ENCODE measurements at regions of chr20 and their contacts with region 1.

Region 1: DNA sequence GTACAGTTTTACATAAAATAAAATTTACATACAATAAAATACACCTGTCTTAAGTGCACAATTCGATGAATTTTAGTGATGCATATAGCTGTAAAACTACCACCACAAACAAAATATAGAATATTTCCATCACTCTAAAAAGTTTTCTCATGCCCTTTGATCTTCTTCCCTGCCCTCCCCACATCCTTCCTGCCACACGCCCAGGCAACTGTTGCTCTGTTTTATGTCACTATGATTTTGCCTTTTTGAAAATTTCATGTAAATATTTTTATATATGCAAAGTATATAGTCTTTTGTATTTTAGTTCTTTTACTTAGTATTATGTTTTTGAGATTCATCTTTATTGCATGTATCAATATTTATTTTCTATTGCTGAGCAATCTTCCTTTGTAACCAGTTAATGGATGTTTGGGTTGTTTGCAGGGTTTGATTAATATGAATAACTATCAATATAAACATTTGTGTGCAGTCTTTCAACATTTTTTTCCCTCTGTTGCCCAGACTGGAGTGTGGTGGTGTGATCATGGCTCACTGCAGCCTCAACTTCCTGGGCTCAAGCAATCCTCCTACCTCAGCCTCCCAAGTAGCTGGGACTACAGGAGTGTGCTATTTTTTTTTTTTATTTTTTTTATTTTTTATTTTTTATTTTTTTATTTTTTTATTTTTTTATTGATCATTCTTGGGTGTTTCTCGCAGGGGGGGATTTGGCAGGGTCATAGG is 23.8 kb upstream of the SAMHD1 start:
- DNase-seq: peak in 8 of 9 donors; percentile 49 to 92 (median 88)
- ATAC-seq: peak; percentile 96
- H3K4me3 ChIP-seq: peak overlapping the region; percentile 8
- H3K4me3 Mint-ChIP-seq: peak overlapping the region; percentile 35 to 87 (median 70)
- H3K27ac ChIP-seq: peak overlapping the region; percentile 69
- H3K27ac Mint-ChIP-seq: peak overlapping the region; percentile 72 to 99 (median 91)
- H3K4me1 ChIP-seq: peaks cover 29 to 40% of the 10 kb centered on the region in 2 donors
- H3K4me1 Mint-ChIP-seq: peaks cover 16 to 53% (median 41%) of the 10 kb centered on the region in 7 donors
- H3K27me3 ChIP-seq: no peaks in the 10 kb centered on the region
- H3K27me3 Mint-ChIP-seq: no peaks in the 10 kb centered on the region

Region 2: GRCh38 chr20:36919715-36920333 is 55.4 kb before region 1 on chr20:
- CTCF ChIA-PET with region 1: no interaction called
- POLR2A ChIA-PET with region 1: interaction called, 8 read pairs
- intact Hi-C with region 1: loop called in 1 of 2 experiments (anchors 1 kb)
- DNase-seq: peak in 7 of 9 donors; percentile 43 to 73 (median 67)
- ATAC-seq: peak; percentile 90
- H3K4me3 ChIP-seq: no peak overlapping the region
- H3K4me3 Mint-ChIP-seq: peak overlapping the region in 5 of 10 donors; percentile 2 to 34 (median 26)
- H3K27ac ChIP-seq: peak overlapping the region; percentile 47
- H3K27ac Mint-ChIP-seq: peak overlapping the region; percentile 56 to 98 (median 75)
- H3K4me1 ChIP-seq: peaks cover 0 to 30% of the 10 kb centered on the region in 2 donors
- H3K4me1 Mint-ChIP-seq: peaks cover 15 to 44% (median 24%) of the 10 kb centered on the region in 7 donors
- H3K27me3 ChIP-seq: no peaks in the 10 kb centered on the region
- H3K27me3 Mint-ChIP-seq: no peaks in the 10 kb centered on the region

Region 3: GRCh38 chr20:36941401-36941835 is 33.8 kb before region 1 on chr20:
- CTCF ChIA-PET with region 1: interaction called, 3 read pairs
- POLR2A ChIA-PET with region 1: interaction called, 19 read pairs
- intact Hi-C with region 1: loop called (anchors 1 kb)
- DNase-seq: no peak
- ATAC-seq: peak; percentile 31
- H3K4me3 ChIP-seq: peak overlapping the region; percentile 22
- H3K4me3 Mint-ChIP-seq: peak overlapping the region; percentile 46 to 99 (median 70)
- H3K27ac ChIP-seq: peak overlapping the region; percentile 91
- H3K27ac Mint-ChIP-seq: peak overlapping the region; percentile 29 to 99 (median 91)
- H3K4me1 ChIP-seq: peaks cover 72 to 83% of the 10 kb centered on the region in 2 donors
- H3K4me1 Mint-ChIP-seq: peaks cover 38 to 85% (median 77%) of the 10 kb centered on the region in 7 donors
- H3K27me3 ChIP-seq: no peaks in the 10 kb centered on the region
- H3K27me3 Mint-ChIP-seq: no peaks in the 10 kb centered on the region

Region 4: GRCh38 chr20:36957875-36958667 is 17.2 kb before region 1 on chr20:
- CTCF ChIA-PET with region 1: interaction called, 11 read pairs
- POLR2A ChIA-PET with region 1: interaction called, 57 read pairs
- intact Hi-C with region 1: no loop called
- DNase-seq: no peak
- ATAC-seq: peak; percentile 86
- H3K4me3 ChIP-seq: no peak overlapping the region
- H3K4me3 Mint-ChIP-seq: no peak overlapping the region
- H3K27ac ChIP-seq: no peak overlapping the region
- H3K27ac Mint-ChIP-seq: peak overlapping the region in 5 of 9 donors; percentile 10 to 54 (median 14)
- H3K4me1 ChIP-seq: peaks cover 14 to 17% of the 10 kb centered on the region in 2 donors
- H3K4me1 Mint-ChIP-seq: peaks cover 26 to 60% (median 33%) of the 10 kb centered on the region in 7 donors
- H3K27me3 ChIP-seq: no peaks in the 10 kb centered on the region
- H3K27me3 Mint-ChIP-seq: no peaks in the 10 kb centered on the region

Region 5: GRCh38 chr20:36998652-36999051 is 23.4 kb after region 1 on chr20:
- CTCF ChIA-PET with region 1: interaction called, 3 read pairs
- POLR2A ChIA-PET with region 1: interaction called, 11 read pairs
- intact Hi-C with region 1: no loop called
- DNase-seq: peak in 7 of 9 donors; percentile 56 to 84 (median 76)
- ATAC-seq: peak; percentile 82
- H3K4me3 ChIP-seq: no peak overlapping the region
- H3K4me3 Mint-ChIP-seq: peak overlapping the region in 6 of 10 donors; percentile 1 to 67 (median 37)
- H3K27ac ChIP-seq: peak overlapping the region; percentile 64
- H3K27ac Mint-ChIP-seq: peak overlapping the region; percentile 80 to 99 (median 93)
- H3K4me1 ChIP-seq: no peaks in the 10 kb centered on the region
- H3K4me1 Mint-ChIP-seq: peaks cover 11 to 41% (median 31%) of the 10 kb centered on the region in 7 donors
- H3K27me3 ChIP-seq: no peaks in the 10 kb centered on the region
- H3K27me3 Mint-ChIP-seq: no peaks in the 10 kb centered on the region